Heart left ventricle (tissue), 16 donors: ENCODE measurements at regions of chr9 and their contacts with region 1.

Region 1: DNA sequence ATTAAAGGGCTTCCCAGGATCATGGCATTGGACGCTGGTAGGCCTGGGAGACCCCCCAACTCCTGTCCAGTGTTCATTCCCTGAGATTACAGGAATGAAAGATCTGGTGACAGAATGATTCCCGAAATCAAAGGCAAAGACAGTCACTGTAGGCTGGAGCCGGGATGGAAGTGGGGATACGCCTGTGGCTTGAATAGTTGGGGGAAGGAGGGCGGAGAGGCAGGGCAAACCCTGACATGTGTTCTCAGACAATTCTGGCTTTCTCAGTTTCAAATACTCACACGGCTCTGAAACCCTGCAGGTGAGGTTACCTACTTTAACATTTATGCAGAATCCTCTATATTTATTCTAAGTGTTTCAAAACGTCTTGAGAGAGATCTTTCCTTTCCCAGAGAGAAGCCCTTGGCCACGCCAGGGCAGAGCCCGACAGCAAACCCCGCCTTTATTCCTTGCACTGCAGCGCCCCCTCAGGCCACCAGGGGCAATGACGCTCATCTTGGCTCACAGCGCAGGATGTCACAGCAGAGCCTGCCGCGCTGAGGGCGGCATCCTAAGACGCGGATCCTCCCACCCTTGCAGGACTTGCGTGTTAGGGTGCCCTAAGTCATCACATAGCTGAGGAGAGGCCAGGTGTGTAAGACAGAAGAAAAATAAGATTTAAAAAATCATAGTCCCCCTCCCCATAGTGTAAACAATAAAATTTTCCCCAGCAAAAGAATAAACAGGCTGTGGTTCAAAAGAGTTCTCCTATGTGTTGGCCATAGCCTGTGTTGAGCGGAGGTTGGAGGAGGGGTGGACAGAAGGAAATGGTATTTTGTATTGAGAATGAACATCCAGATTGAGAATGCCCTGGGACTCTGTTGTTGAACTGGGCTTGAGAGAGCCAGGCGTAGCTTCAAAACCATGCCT is 284.5 kb downstream of the NTRK2 start:
- DNase-seq: peak; percentile 71 to 84 (median 76)
- ATAC-seq: peak; percentile 89 to 99 (median 94)
- H3K4me3 ChIP-seq: no peak overlapping the region
- H3K27ac ChIP-seq: peak overlapping the region in 1 of 12 donors; percentile 13
- H3K4me1 ChIP-seq: peaks cover 0 to 24% (median 2%) of the 10 kb centered on the region in 12 donors
- H3K27me3 ChIP-seq: no peaks in the 10 kb centered on the region
- CTCF ChIP-seq: peak; percentile 91 to 98 (median 95)
- POLR2A ChIP-seq: no peak

Region 2: DNA sequence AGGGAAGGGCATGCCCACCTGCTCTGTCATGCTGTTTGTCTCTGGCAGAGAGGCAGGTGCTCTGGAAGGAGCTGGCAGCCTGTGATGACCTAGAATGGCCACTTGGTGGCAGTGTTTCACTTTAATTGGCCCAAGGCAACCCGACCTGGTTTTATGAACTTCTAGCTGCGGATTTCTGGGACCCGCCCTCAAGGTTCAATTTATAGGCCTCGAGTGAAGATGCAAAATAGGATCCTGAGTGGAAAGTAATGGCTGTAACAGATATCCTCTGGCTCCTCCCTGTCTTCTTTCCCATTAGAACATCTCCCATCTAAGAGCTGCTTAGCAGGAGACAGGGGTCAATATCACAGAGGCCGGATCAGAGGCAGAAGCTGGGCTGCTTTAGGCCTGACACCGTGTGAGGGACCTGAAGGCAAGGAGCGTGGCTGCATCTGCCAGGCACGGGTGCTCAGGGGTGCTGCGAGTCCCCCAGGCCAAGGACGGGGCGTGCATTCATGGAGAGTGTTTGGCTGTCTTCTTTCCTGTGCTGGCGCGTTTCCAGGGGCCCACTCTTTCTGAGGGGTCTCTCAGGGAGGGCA is 556.8 kb before region 1 on chr9:
- intact Hi-C with region 1: loop called (anchors 2 to 10 kb)
- DNase-seq: peak in 4 of 5 donors; percentile 37 to 63 (median 54)
- ATAC-seq: peak in 3 of 4 donors; percentile 80 to 84 (median 81)
- H3K4me3 ChIP-seq: no peak overlapping the region
- H3K27ac ChIP-seq: no peak overlapping the region
- H3K4me1 ChIP-seq: peaks cover 0 to 9% (median 0%) of the 10 kb centered on the region in 12 donors
- H3K27me3 ChIP-seq: peaks cover 0 to 14% (median 0%) of the 10 kb centered on the region in 9 donors
- CTCF ChIP-seq: peak; percentile 87 to 96 (median 93)
- POLR2A ChIP-seq: no peak

Region 3: GRCh38 chr9:84668196-84669012 is 285.6 kb before region 1 on chr9:
- intact Hi-C with region 1: loop called in 1 of 10 experiments (anchors 10 kb)
- DNase-seq: peak; percentile 51 to 78 (median 68)
- ATAC-seq: peak; percentile 71 to 94 (median 92)
- H3K4me3 ChIP-seq: peak overlapping the region; percentile 24 to 65 (median 54)
- H3K27ac ChIP-seq: peak overlapping the region in 3 of 12 donors; percentile 8 to 41 (median 24)
- H3K4me1 ChIP-seq: peaks cover 0 to 34% (median 11%) of the 10 kb centered on the region in 12 donors
- H3K27me3 ChIP-seq: peaks cover 0 to 49% (median 16%) of the 10 kb centered on the region in 9 donors
- CTCF ChIP-seq: peak; percentile 28 to 75 (median 58)
- POLR2A ChIP-seq: no peak

Region 4: DNA sequence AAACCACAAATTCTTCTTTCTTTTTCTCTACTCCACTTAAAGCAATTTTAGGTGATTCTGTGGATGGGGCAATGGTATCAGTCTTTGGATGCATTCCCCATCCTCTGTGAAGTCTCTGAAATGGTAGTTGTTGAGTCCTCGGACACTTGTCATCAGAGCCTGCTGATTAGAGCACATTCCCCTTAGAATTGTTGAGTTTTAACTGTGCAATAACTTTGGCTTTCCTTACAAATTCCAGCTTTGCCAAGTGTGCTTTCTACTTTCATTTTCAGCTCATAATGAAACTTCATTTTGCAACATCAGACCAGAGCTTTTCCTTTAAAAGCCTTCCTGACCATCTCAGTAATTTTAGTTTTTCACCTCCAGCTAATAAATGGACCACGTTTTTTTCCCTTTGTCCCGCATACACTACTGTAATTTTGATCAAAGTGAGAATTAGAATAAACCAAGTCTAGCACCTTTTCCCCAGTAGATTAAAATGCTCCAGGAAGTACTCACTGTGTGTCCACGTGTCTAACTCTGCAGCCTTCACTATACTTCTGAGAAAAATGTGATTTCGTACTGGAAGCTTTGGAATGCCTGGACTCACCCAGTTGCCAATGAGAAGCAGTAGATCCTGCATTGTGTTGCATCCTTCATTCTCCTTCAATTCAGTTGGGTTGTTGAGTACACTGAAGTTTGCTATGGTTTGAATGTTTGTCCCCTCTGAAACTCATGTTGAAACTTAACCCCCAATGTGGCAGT is 148.9 kb before region 1 on chr9:
- intact Hi-C with region 1: loop called in 2 of 10 experiments (anchors 10 kb)
- DNase-seq: no peak
- ATAC-seq: no peak
- H3K4me3 ChIP-seq: peak overlapping the region in 3 of 12 donors; percentile 2 to 26 (median 4)
- H3K27ac ChIP-seq: peak overlapping the region in 2 of 12 donors; percentile 9 to 27
- H3K4me1 ChIP-seq: peaks cover 0 to 7% (median 0%) of the 10 kb centered on the region in 12 donors
- H3K27me3 ChIP-seq: no peaks in the 10 kb centered on the region
- CTCF ChIP-seq: no peak
- POLR2A ChIP-seq: no peak

Region 5: GRCh38 chr9:84897362-84898094 is 56.5 kb before region 1 on chr9:
- intact Hi-C with region 1: no loop called
- DNase-seq: no peak
- ATAC-seq: no peak
- H3K4me3 ChIP-seq: no peak overlapping the region
- H3K27ac ChIP-seq: no peak overlapping the region
- H3K4me1 ChIP-seq: peaks cover 0 to 14% (median 4%) of the 10 kb centered on the region in 12 donors
- H3K27me3 ChIP-seq: no peaks in the 10 kb centered on the region
- CTCF ChIP-seq: no peak
- POLR2A ChIP-seq: no peak

Region 6: DNA sequence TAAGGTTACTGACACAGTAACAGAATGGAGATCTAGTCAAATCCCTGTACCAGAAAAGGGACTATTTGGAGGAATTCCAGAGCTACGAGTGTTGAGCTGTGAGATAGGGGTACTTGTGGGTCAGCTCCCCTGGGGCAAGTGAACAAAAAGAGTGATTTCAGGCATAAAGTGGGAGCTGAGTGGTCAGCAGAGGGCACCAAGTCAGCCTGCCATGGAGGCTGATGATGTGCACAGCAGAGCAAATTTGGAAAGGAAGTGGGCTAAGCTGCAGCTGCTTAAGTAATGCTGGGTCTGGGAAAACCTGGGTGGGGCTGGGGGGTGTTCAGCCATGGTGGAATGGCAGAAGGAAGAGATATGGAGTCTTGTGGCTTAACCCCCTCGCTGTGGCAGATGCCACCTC is 43.4 kb after region 1 on chr9:
- intact Hi-C with region 1: no loop called
- DNase-seq: no peak
- ATAC-seq: no peak
- H3K4me3 ChIP-seq: no peak overlapping the region
- H3K27ac ChIP-seq: no peak overlapping the region
- H3K4me1 ChIP-seq: no peaks in the 10 kb centered on the region
- H3K27me3 ChIP-seq: peaks cover 0 to 21% (median 0%) of the 10 kb centered on the region in 9 donors
- CTCF ChIP-seq: no peak
- POLR2A ChIP-seq: no peak

Region 7: GRCh38 chr9:85009251-85009650 is 55.2 kb after region 1 on chr9:
- intact Hi-C with region 1: no loop called
- DNase-seq: no peak
- ATAC-seq: no peak
- H3K4me3 ChIP-seq: no peak overlapping the region
- H3K27ac ChIP-seq: no peak overlapping the region
- H3K4me1 ChIP-seq: no peaks in the 10 kb centered on the region
- H3K27me3 ChIP-seq: peaks cover 0 to 9% (median 0%) of the 10 kb centered on the region in 9 donors
- CTCF ChIP-seq: no peak
- POLR2A ChIP-seq: no peak

Region 8: DNA sequence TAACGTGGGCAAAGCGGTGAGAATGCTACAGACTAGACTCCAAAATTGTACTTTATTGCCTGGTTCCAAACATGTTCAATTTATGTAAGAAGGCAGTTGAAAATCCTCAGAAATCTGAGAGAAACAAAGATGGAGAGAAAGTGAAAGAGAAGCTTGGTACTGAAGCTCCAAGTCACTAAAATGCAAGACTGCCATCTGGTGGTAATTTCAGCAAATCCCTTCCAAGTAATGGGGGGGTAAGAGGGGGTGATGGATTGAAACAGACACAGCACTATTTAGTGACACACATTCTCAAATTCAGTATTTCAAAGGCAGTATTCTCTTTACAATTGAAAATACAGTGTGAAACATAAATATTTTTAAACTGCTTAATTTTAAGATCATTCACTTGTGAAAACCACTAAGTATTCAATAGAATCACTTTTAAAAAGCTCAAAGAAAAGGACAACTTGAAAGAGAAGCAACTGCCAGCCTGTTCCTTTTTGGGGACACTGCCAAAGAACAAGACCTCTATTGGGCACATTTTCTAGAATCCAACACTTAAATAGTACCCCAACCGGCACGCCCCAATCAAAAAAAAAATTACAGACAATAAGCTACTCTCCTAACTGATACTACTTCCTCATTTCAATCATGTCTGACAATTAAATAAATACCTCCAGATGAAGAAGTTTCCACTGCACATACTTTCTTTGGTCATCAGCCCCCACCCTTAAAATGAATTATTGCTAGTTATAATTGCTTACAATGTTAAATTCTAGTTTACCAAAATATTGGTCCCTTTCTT is 656.2 kb after region 1 on chr9:
- intact Hi-C with region 1: loop called in 1 of 10 experiments (anchors 10 kb)
- DNase-seq: no peak
- ATAC-seq: peak in 3 of 4 donors; percentile 64 to 78 (median 73)
- H3K4me3 ChIP-seq: peak overlapping the region in 7 of 12 donors; percentile 5 to 46 (median 31)
- H3K27ac ChIP-seq: peak overlapping the region in 1 of 12 donors; percentile 18
- H3K4me1 ChIP-seq: peaks cover 0 to 7% (median 0%) of the 10 kb centered on the region in 12 donors
- H3K27me3 ChIP-seq: no peaks in the 10 kb centered on the region
- CTCF ChIP-seq: peak; percentile 69 to 90 (median 76)
- POLR2A ChIP-seq: no peak